T-cell (primary cell): ENCODE measurements at regions of chr6 and their contacts with region 1.

Region 1: DNA sequence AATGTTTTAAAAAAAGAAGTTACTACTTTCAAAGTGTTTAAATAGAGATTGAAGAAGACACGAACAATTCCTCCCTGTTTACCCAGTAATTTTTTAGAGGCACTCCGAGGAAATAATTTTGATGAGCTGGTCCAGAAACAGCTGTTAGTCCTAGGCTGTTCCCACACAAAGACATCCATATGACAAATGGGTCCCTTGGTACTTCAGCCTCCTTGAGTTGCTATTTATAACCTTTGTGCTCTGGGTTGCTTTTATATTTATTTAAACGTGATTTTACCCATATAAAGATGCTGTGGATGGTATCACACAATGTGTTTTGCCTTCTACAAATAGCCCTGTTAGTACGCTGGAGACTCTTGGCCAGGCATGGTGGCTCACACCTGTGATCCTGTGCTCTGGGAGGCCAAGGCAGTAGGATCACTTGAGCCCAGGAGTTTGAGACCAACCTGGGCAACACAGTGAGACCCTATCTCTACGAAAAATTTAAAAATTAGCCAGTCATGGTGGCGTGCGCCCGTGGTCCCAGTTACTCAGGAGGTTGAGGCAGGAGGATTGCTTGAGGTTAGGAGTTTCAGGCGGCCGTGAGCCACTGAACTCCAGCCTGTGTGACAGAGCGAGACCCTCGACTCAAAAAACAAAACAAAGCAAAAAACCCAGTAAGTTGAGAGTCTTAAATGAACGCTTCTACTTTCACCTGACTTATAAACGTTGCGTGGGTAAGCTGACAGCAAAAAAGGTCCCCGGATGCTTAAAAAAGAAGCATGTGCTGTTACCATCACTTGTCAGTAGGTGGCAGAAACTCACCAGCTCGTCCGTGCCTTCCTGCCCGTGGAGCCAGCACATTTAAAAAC is 56.9 kb upstream of the ARMH2 start:
- DNase-seq: peak in 34 of 35 experiments; percentile 47 to 90 (median 64)
- ATAC-seq: peak; percentile 32 to 59 (median 50)
- H3K4me3 ChIP-seq: no peak overlapping the region
- H3K4me3 Mint-ChIP-seq: peak overlapping the region in 1 of 3 donors; percentile 73
- H3K27ac ChIP-seq: peak overlapping the region; percentile 76
- H3K27ac Mint-ChIP-seq: peak overlapping the region; percentile 95 to 99
- H3K4me1 ChIP-seq: peaks cover 42 to 47% of the 10 kb centered on the region in 2 experiments
- H3K4me1 Mint-ChIP-seq: peaks cover 52 to 72% (median 59%) of the 10 kb centered on the region in 3 donors
- H3K27me3 ChIP-seq: no peaks in the 10 kb centered on the region
- H3K27me3 Mint-ChIP-seq: no peaks in the 10 kb centered on the region

Region 2: GRCh38 chr6:24924580-24925356 is 69.1 kb after region 1 on chr6:
- CTCF ChIA-PET with region 1: interaction called in 1 of 2 experiments, 4 read pairs
- POLR2A ChIA-PET with region 1: interaction called in 1 of 2 experiments, 14 read pairs
- DNase-seq: peak in 1 of 35 experiments; percentile 46
- ATAC-seq: peak; percentile 28 to 54 (median 38)
- H3K4me3 ChIP-seq: peak overlapping the region in 1 of 2 donors; percentile 26
- H3K4me3 Mint-ChIP-seq: peak overlapping the region; percentile 75 to 93 (median 76)
- H3K27ac ChIP-seq: peak overlapping the region; percentile 27
- H3K27ac Mint-ChIP-seq: peak overlapping the region; percentile 83 to 91
- H3K4me1 ChIP-seq: peaks cover 66 to 72% of the 10 kb centered on the region in 2 experiments
- H3K4me1 Mint-ChIP-seq: peaks cover 88 to 98% (median 91%) of the 10 kb centered on the region in 3 donors
- H3K27me3 ChIP-seq: no peaks in the 10 kb centered on the region
- H3K27me3 Mint-ChIP-seq: no peaks in the 10 kb centered on the region